GM10248 (cell line): ENCODE measurements at regions of chr6 and their contacts with region 1.

Region 1: GRCh38 chr6:42547407-42548329 is 16.2 kb upstream of the UBR2 start:
- DNase-seq: peak; percentile 93
- CTCF ChIP-seq: peak; percentile 98

Region 2: GRCh38 chr6:42212442-42212841 is 335.2 kb before region 1 on chr6:
- CTCF ChIA-PET with region 1: interaction called, 13 read pairs
- POLR2A ChIA-PET with region 1: no interaction called
- DNase-seq: no peak
- CTCF ChIP-seq: no peak

Region 3: GRCh38 chr6:42260972-42261371 is 286.7 kb before region 1 on chr6:
- CTCF ChIA-PET with region 1: interaction called, 107 read pairs
- POLR2A ChIA-PET with region 1: no interaction called
- DNase-seq: peak; percentile 59
- CTCF ChIP-seq: peak; percentile 68

Region 4: DNA sequence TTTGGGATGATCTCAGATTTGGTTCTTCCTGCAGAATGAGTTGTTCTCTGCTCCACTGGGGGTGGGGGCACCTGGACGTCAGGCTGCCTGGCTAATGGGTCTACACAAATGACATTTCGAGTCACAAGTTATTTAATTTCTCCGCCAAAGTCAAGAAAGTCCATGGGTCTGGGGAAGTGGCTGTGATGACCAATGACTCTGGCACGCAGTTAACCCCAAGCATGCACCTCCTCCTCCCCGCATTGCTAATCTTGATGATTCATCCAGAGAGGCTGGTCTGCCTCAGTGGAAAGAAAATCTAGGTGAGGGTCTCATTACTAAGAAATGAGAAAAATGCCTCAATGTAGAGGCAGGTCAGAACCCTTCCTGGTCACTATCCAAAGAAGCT is 231.7 kb before region 1 on chr6:
- CTCF ChIA-PET with region 1: interaction called, 43 read pairs
- POLR2A ChIA-PET with region 1: no interaction called
- DNase-seq: peak; percentile 50
- CTCF ChIP-seq: no peak

Region 5: GRCh38 chr6:42505377-42505702 is 42.3 kb before region 1 on chr6:
- CTCF ChIA-PET with region 1: interaction called, 29 read pairs
- POLR2A ChIA-PET with region 1: no interaction called
- DNase-seq: no peak
- CTCF ChIP-seq: no peak

Region 6: DNA sequence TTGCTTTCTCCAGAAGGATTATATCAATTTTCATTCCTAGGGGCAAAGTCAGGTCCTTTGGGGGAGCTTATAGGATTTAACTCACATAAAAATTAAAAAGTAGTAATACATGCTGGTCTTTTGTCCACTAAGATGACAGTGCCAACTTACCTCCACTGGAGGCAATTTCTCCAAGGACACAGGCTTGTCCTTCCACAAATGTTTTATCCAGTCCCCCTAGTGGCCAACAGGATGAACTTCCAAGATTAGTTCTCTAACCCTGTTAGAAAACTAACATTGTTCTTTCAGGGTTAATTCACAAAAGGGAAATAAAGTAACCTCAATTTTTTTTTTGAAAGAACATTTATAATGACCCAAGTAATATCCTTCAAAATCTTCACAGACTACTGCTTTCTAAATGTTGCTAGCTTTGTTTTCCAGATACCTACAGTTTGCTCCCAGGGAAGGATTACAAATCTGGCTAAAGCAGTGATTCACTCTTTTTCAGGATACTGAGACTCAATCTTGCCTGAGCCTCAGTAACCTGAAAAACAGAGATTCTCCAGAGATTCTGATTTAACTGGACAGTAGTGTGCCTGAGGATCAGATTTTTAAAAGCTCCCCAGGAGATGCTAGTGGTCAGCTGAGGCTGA is 15.5 kb before region 1 on chr6:
- CTCF ChIA-PET with region 1: interaction called, 41 read pairs
- POLR2A ChIA-PET with region 1: no interaction called
- DNase-seq: peak; percentile 69
- CTCF ChIP-seq: peak; percentile 84

Region 7: DNA sequence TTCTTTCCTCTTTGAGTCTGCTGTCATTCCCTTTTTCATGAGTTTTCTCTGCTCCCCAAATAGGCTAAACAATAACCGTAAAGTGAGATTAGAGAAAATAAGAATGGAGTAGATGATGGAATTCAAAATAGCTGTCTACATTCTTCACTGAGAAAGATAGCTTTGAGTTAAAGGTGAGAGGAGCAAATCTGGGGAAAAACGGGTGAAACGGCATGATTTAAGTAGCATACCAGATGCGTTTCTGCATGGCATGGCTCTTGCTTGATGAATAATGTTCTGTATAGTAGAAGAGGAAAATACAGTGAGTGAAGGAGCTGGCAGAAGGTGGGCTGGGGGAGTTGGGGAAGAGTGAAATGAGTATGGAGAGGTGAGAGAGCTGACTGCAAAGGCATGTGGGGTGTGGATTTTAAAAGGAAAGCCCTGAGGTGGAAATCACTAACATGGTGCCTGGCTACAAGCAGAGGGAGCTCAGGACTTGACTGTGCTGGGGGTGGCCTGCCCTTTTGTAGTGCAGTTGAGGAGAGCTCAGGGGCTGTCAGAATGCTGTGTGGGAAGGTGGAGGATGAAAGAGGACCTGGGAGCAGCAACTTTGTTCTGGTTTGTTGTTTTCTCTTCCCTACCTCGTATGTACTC is 243.0 kb after region 1 on chr6:
- CTCF ChIA-PET with region 1: no interaction called
- POLR2A ChIA-PET with region 1: no interaction called
- DNase-seq: no peak
- CTCF ChIP-seq: no peak